Naive thymus-derived CD4-positive, alpha-beta T cell (primary cell): ENCODE measurements at regions of chr3 and their contacts with region 1.

Region 1: GRCh38 chr3:30332196-30333021 is 274.0 kb upstream of the TGFBR2 start:
- DNase-seq: peak in 7 of 9 donors; percentile 45 to 83 (median 76)
- ATAC-seq: peak; percentile 89
- H3K4me3 ChIP-seq: peak overlapping the region; percentile 35
- H3K4me3 Mint-ChIP-seq: peak overlapping the region; percentile 63 to 91 (median 84)
- H3K27ac ChIP-seq: peak overlapping the region; percentile 28
- H3K27ac Mint-ChIP-seq: peak overlapping the region; percentile 74 to 99 (median 96)
- H3K4me1 ChIP-seq: peaks cover 0 to 30% of the 10 kb centered on the region in 2 donors
- H3K4me1 Mint-ChIP-seq: peaks cover 4 to 58% (median 46%) of the 10 kb centered on the region in 7 donors
- H3K27me3 ChIP-seq: no peaks in the 10 kb centered on the region
- H3K27me3 Mint-ChIP-seq: no peaks in the 10 kb centered on the region

Region 2: GRCh38 chr3:30319713-30320112 is 12.7 kb before region 1 on chr3:
- CTCF ChIA-PET with region 1: interaction called, 4 read pairs
- POLR2A ChIA-PET with region 1: interaction called, 3 read pairs
- intact Hi-C with region 1: loop called in 1 of 2 experiments (anchors 1 kb)
- DNase-seq: peak in 7 of 9 donors; percentile 32 to 72 (median 63)
- ATAC-seq: peak; percentile 90
- H3K4me3 ChIP-seq: no peak overlapping the region
- H3K4me3 Mint-ChIP-seq: peak overlapping the region in 4 of 10 donors; percentile 0 to 7 (median 4)
- H3K27ac ChIP-seq: no peak overlapping the region
- H3K27ac Mint-ChIP-seq: peak overlapping the region in 6 of 9 donors; percentile 1 to 60 (median 43)
- H3K4me1 ChIP-seq: peaks cover 0 to 15% of the 10 kb centered on the region in 2 donors
- H3K4me1 Mint-ChIP-seq: peaks cover 3 to 36% (median 20%) of the 10 kb centered on the region in 7 donors
- H3K27me3 ChIP-seq: no peaks in the 10 kb centered on the region
- H3K27me3 Mint-ChIP-seq: no peaks in the 10 kb centered on the region

Region 3: GRCh38 chr3:30342319-30343060 is 10.1 kb after region 1 on chr3:
- CTCF ChIA-PET with region 1: no interaction called
- POLR2A ChIA-PET with region 1: interaction called, 4 read pairs
- intact Hi-C with region 1: loop called (anchors 1 to 2 kb)
- DNase-seq: no peak
- ATAC-seq: no peak
- H3K4me3 ChIP-seq: no peak overlapping the region
- H3K4me3 Mint-ChIP-seq: no peak overlapping the region
- H3K27ac ChIP-seq: no peak overlapping the region
- H3K27ac Mint-ChIP-seq: peak overlapping the region in 1 of 9 donors; percentile 22
- H3K4me1 ChIP-seq: peaks cover 0 to 6% of the 10 kb centered on the region in 2 donors
- H3K4me1 Mint-ChIP-seq: peaks cover 5 to 39% (median 29%) of the 10 kb centered on the region in 7 donors
- H3K27me3 ChIP-seq: no peaks in the 10 kb centered on the region
- H3K27me3 Mint-ChIP-seq: peaks cover 0 to 2% (median 0%) of the 10 kb centered on the region in 5 donors

Region 4: GRCh38 chr3:30347679-30348216 is 15.3 kb after region 1 on chr3:
- CTCF ChIA-PET with region 1: no interaction called
- POLR2A ChIA-PET with region 1: interaction called, 4 read pairs
- intact Hi-C with region 1: loop called (anchors 1 to 2 kb)
- DNase-seq: peak in 6 of 9 donors; percentile 11 to 48 (median 32)
- ATAC-seq: peak; percentile 54
- H3K4me3 ChIP-seq: no peak overlapping the region
- H3K4me3 Mint-ChIP-seq: peak overlapping the region in 6 of 10 donors; percentile 5 to 70 (median 32)
- H3K27ac ChIP-seq: no peak overlapping the region
- H3K27ac Mint-ChIP-seq: peak overlapping the region in 5 of 9 donors; percentile 33 to 80 (median 76)
- H3K4me1 ChIP-seq: peaks cover 15 to 47% of the 10 kb centered on the region in 2 donors
- H3K4me1 Mint-ChIP-seq: peaks cover 40 to 82% (median 71%) of the 10 kb centered on the region in 7 donors
- H3K27me3 ChIP-seq: no peaks in the 10 kb centered on the region
- H3K27me3 Mint-ChIP-seq: peaks cover 0 to 17% (median 0%) of the 10 kb centered on the region in 5 donors

Region 5: DNA sequence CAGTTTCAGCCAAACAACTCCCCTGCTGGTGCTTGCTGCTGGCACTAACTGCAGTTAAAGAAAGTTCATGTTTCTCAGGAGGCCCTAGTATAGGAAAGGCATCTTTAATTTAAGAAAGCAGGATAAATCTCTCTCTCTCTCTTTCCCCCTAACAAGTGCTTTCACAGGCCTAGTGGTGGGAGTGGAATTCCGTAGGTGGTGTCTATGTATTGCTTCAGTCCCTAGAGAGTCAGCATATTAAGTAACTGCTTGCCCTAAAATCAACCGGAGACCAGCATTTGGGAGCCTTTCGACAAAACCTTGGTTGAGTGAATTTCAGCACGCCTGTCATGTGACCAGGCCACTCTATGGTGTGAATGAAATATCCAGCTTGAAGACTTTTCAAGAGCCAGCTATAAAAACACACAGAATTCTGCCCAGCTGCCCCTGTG is 104.8 kb after region 1 on chr3:
- CTCF ChIA-PET with region 1: no interaction called
- POLR2A ChIA-PET with region 1: interaction called, 3 read pairs
- intact Hi-C with region 1: loop called in 1 of 2 experiments (anchors 5 kb)
- DNase-seq: no peak
- ATAC-seq: no peak
- H3K4me3 ChIP-seq: no peak overlapping the region
- H3K4me3 Mint-ChIP-seq: peak overlapping the region in 6 of 10 donors; percentile 12 to 77 (median 22)
- H3K27ac ChIP-seq: no peak overlapping the region
- H3K27ac Mint-ChIP-seq: peak overlapping the region in 5 of 9 donors; percentile 15 to 94 (median 75)
- H3K4me1 ChIP-seq: peaks cover 0 to 23% of the 10 kb centered on the region in 2 donors
- H3K4me1 Mint-ChIP-seq: peaks cover 6 to 47% (median 35%) of the 10 kb centered on the region in 7 donors
- H3K27me3 ChIP-seq: no peaks in the 10 kb centered on the region
- H3K27me3 Mint-ChIP-seq: no peaks in the 10 kb centered on the region